ENCODE measurements at regions of chr1 and their contacts with region 1.

Region 1: DNA sequence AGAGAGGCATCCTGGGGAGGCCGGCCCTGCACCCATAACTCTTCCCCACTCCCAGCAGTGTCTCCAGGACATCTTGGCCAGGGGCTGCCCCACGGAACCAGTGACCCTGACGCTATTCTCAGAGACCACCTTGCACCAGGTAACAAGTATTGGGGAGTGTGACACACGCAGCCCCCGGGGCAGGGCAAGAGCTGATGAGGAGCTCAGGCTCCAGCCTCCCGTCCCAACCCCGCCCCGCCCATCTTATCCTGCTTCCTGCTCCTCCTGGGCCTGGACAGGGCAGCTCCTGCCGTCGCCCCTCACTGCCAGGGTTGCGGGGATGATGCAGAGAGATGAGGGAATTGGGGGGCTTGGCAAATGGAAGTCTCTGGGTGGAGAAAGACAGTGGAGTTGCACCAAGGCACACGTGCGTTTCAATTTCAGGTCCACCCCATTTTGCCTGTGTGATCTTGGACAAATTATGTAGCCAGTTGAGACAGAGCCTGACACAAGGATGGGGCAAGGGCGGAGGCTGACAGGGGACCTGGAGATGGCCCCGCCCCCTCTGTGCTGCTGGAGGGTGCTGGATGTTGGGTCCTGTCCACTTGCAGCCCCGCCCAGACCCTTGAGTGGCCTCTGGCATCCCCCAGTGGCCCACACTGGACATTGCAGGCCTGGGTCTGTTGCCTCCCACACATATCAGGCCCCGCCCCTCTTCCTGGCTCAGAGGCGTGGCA is 10.7 kb downstream of the CLCNKA start:
- DNase-seq: peak; percentile 88 to 92 (median 89)
- H3K4me3 ChIP-seq: no peak overlapping the region
- H3K27ac ChIP-seq: no peak overlapping the region
- H3K4me1 ChIP-seq: peaks cover 4% of the 10 kb centered on the region
- H3K27me3 ChIP-seq: no peaks in the 10 kb centered on the region
- CTCF ChIP-seq: peak; percentile 97 to 99 (median 98)
- EP300 ChIP-seq: no peak
- POLR2A ChIP-seq: no peak

Region 2: GRCh38 chr1:16055613-16056520 is 23.3 kb after region 1 on chr1:
- intact Hi-C with region 1: loop called in 2 of 4 experiments (anchors 1 to 2 kb)
- DNase-seq: peak; percentile 82 to 91 (median 89)
- H3K4me3 ChIP-seq: no peak overlapping the region
- H3K27ac ChIP-seq: no peak overlapping the region
- H3K4me1 ChIP-seq: no peaks in the 10 kb centered on the region
- H3K27me3 ChIP-seq: no peaks in the 10 kb centered on the region
- CTCF ChIP-seq: peak; percentile 92 to 96 (median 96)
- EP300 ChIP-seq: no peak
- POLR2A ChIP-seq: no peak